Natural killer cell (primary cell): ENCODE measurements at regions of chr10 and their contacts with region 1.

Region 1: GRCh38 chr10:97400665-97401454 is at the start of gene RRP12:
- DNase-seq: peak; percentile 74 to 98
- ATAC-seq: peak; percentile 88 to 98 (median 98)
- H3K4me3 ChIP-seq: peak within 1 kb of the TSS; percentile 82
- H3K4me3 Mint-ChIP-seq: peak within 1 kb of the TSS; percentile 96
- H3K27ac ChIP-seq: peak within 1 kb of the TSS; percentile 94
- H3K27ac Mint-ChIP-seq: peak within 1 kb of the TSS; percentile 91 to 97
- H3K4me1 ChIP-seq: peaks cover 20% of the 10 kb centered on the region
- H3K4me1 Mint-ChIP-seq: peaks cover 14 to 15% of the 10 kb centered on the region in 2 donors
- H3K27me3 ChIP-seq: no peaks in the 10 kb centered on the region
- H3K27me3 Mint-ChIP-seq: no peaks in the 10 kb centered on the region
- CTCF ChIP-seq: no peak
- total RNA-seq, gene RRP12: 60.1 to 234 (median 79.2) TPM

Region 2: DNA sequence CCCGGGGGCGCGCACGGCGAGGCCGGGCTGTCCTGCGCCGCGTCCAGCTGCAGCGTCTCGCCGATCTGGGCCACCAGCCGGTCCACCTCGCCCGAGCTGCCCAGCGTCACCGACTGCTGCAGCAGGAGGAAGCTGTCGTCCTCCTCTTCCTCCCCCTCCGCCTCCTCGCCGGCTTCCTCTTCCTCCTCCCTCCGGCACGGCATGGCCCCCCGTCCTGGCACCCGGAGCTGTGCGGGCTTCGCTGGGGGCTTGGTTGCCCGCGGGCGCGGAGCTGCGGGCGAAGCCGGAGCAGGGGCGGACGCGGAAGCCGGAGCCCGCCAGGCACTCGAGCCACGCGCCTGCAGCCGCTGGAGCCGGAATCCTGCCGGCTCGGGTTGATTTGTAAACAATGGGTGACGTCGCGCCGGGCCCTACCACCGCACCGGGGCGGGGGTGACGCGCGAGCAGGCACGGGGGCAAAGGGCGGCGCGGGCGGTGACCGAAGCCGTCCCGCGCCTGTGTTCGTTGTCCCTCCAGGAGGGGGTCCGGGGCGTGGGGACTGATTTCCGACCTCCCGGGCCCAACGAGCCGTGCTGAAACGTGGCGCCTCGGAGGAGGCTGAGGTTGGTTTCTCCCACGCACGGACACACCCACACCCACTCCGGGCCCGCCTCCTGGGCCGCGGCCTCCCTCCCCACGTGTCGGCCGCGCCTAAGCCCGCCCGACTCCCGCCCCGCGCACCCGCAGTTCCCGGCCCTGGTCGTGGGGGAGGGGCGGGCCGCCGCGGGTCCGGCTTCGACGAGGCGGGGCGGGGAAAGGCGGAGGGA is 66.3 kb before region 1 on chr10 and contains the start of gene FRAT2:
- intact Hi-C with region 1: loop called (anchors 10 kb)
- DNase-seq: peak; percentile 89 to 94
- ATAC-seq: peak; percentile 89 to 95 (median 91)
- H3K4me3 ChIP-seq: peak within 1 kb of the TSS; percentile 69
- H3K4me3 Mint-ChIP-seq: peak within 1 kb of the TSS; percentile 95
- H3K27ac ChIP-seq: peak within 1 kb of the TSS; percentile 100
- H3K27ac Mint-ChIP-seq: peak within 1 kb of the TSS; percentile 85
- H3K4me1 ChIP-seq: peaks cover 32% of the 10 kb centered on the region
- H3K4me1 Mint-ChIP-seq: peaks cover 24 to 35% of the 10 kb centered on the region in 2 donors
- H3K27me3 ChIP-seq: peaks cover 2% of the 10 kb centered on the region
- H3K27me3 Mint-ChIP-seq: peaks cover 0 to 2% of the 10 kb centered on the region in 2 donors
- CTCF ChIP-seq: no peak
- total RNA-seq, gene FRAT2: 18.7 to 23.4 (median 22.2) TPM

Region 3: GRCh38 chr10:97356318-97356914 is 44.4 kb before region 1 on chr10:
- intact Hi-C with region 1: loop called (anchors 1 kb)
- DNase-seq: peak; percentile 49 to 73
- ATAC-seq: peak; percentile 91 to 93 (median 92)
- H3K4me3 ChIP-seq: no peak overlapping the region
- H3K4me3 Mint-ChIP-seq: peak overlapping the region; percentile 64
- H3K27ac ChIP-seq: peak overlapping the region; percentile 62
- H3K27ac Mint-ChIP-seq: peak overlapping the region; percentile 82 to 89
- H3K4me1 ChIP-seq: peaks cover 24% of the 10 kb centered on the region
- H3K4me1 Mint-ChIP-seq: peaks cover 17% of the 10 kb centered on the region in 2 donors
- H3K27me3 ChIP-seq: no peaks in the 10 kb centered on the region
- H3K27me3 Mint-ChIP-seq: no peaks in the 10 kb centered on the region
- CTCF ChIP-seq: peak; percentile 16

Region 4: DNA sequence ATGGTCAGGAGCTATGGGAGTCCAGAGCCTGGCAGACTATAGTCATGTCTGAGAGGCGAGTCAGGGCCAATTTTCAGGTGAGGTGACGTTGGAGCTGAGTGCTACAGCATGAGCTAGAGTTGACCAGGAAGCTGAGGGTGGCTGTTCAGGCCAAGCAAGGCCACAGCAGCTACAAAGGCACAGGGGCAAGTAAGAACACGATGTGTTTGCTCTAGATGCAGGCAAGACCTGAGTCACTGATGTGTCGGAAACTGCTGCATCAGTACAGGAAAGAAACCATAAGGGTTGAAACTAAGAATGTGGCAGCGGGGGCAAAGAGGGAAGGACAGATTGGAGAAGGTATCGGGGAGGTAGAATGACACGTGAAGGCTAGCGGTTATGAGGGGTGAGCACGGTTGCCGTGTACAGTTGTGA is 12.0 kb after region 1 on chr10:
- intact Hi-C with region 1: loop called (anchors 2 kb)
- DNase-seq: no peak
- ATAC-seq: no peak
- H3K4me3 ChIP-seq: no peak overlapping the region
- H3K4me3 Mint-ChIP-seq: no peak overlapping the region
- H3K27ac ChIP-seq: peak overlapping the region; percentile 90
- H3K27ac Mint-ChIP-seq: peak overlapping the region; percentile 82 to 90
- H3K4me1 ChIP-seq: peaks cover 51% of the 10 kb centered on the region
- H3K4me1 Mint-ChIP-seq: peaks cover 33 to 44% of the 10 kb centered on the region in 2 donors
- H3K27me3 ChIP-seq: no peaks in the 10 kb centered on the region
- H3K27me3 Mint-ChIP-seq: no peaks in the 10 kb centered on the region
- CTCF ChIP-seq: no peak

Region 5: GRCh38 chr10:97445722-97446639 is 45.1 kb after region 1 on chr10 and contains the starts of genes EXOSC1 and ZDHHC16:
- intact Hi-C with region 1: loop called (anchors 1 kb)
- DNase-seq: peak; percentile 80 to 95
- ATAC-seq: peak; percentile 97 to 99 (median 98)
- H3K4me3 ChIP-seq: peak within 1 kb of the TSS; percentile 72
- H3K4me3 Mint-ChIP-seq: peak within 1 kb of the TSS; percentile 99
- H3K27ac ChIP-seq: peak within 1 kb of the TSS; percentile 46
- H3K27ac Mint-ChIP-seq: peak within 1 kb of the TSS; percentile 93 to 95
- H3K4me1 ChIP-seq: peaks cover 19% of the 10 kb centered on the region
- H3K4me1 Mint-ChIP-seq: peaks cover 42 to 44% of the 10 kb centered on the region in 2 donors
- H3K27me3 ChIP-seq: no peaks in the 10 kb centered on the region
- H3K27me3 Mint-ChIP-seq: no peaks in the 10 kb centered on the region
- CTCF ChIP-seq: no peak
- total RNA-seq, gene EXOSC1: 36.9 to 44.4 (median 37.6) TPM
- total RNA-seq, gene ZDHHC16: 11.3 to 18.7 (median 12.7) TPM

Region 6: GRCh38 chr10:97498076-97498840 is 97.4 kb after region 1 on chr10 and contains the start of gene MMS19:
- intact Hi-C with region 1: loop called (anchors 2 kb)
- DNase-seq: peak; percentile 99 to 100
- ATAC-seq: peak; percentile 87 to 95 (median 89)
- H3K4me3 ChIP-seq: peak within 1 kb of the TSS; percentile 83
- H3K4me3 Mint-ChIP-seq: peak within 1 kb of the TSS; percentile 98
- H3K27ac ChIP-seq: peak within 1 kb of the TSS; percentile 72
- H3K27ac Mint-ChIP-seq: peak within 1 kb of the TSS; percentile 91 to 98
- H3K4me1 ChIP-seq: peaks cover 7% of the 10 kb centered on the region
- H3K4me1 Mint-ChIP-seq: peaks cover 33 to 38% of the 10 kb centered on the region in 2 donors
- H3K27me3 ChIP-seq: peaks cover 12% of the 10 kb centered on the region
- H3K27me3 Mint-ChIP-seq: peaks cover 23 to 24% of the 10 kb centered on the region in 2 donors
- CTCF ChIP-seq: no peak
- total RNA-seq, gene MMS19: 53.8 to 68.4 (median 61.7) TPM